Ascending aorta (tissue), 2 donors: ENCODE measurements at regions of chr7 and their contacts with region 1.

Region 1: DNA sequence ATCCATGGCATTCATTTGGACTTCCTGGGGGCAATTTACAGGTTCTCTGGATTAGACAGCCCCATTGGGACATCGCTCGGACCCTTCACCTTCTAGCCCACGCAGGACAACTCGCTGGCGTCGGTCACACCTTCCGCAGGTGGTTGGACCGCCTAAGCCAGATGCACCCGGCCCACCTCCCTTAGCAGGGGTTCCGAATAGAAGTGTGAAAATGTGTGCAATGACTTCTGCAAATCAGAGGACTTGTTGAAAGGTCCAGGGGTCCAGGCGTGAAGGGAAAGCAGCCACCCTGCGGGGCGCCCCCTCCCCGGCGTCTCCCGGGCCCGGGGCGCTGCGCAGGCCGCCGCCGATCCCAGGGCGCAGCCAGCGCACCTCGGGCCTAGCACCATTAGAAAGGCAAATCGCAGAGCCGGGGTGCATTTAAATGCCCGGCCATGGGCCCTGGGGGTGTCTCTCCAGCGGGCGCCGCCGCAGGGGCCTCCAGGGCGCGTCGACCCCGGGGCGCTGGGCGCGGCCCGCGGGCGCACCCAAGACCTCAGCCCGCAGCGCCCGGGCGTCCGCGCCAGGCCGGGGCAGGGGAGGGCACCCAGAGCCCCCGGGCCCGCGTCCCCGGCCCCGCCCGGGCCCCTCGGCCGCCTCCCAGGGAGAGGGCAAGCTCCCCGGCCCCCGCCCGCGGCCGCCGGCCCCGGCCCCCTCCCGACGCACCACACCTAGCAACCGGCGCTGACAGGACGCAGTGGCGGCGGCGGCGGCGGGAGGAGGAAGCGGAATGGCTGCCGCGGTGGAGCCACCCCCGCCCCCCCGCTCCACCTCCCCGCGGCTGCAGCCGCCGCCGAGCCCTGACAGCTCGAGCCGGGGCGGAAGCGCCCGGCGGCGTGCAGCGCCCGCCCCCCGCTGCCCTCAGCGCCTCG is 1.2 kb downstream of the JAZF1 start:
- DNase-seq: peak in 1 of 2 donors; percentile 85
- H3K4me3 ChIP-seq: peak overlapping the region; percentile 91 to 100
- H3K27ac ChIP-seq: peak overlapping the region; percentile 67 to 89
- H3K4me1 ChIP-seq: peaks cover 0 to 11% of the 10 kb centered on the region in 2 donors
- H3K27me3 ChIP-seq: no peaks in the 10 kb centered on the region
- CTCF ChIP-seq: no peak

Region 2: DNA sequence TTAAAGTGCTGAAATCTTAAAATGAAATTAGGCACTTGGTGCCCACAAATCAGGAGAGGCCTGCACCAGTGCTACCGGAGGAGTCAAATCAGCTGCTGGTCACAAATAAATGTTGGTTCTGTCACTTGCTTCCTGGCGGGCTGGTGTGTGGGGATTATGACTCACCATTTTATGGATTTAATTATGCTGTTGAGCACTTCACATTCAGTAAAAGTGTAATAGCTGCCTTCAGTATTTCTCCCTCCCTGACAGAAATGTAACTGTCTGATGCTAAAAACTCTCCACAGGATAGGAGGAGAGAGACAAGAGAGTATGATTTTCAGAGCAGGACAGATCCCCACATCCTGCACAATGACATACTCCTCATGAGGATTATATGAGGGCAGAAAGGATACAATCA is 184.7 kb before region 1 on chr7:
- intact Hi-C with region 1: no loop called
- DNase-seq: no peak
- H3K4me3 ChIP-seq: no peak overlapping the region
- H3K27ac ChIP-seq: no peak overlapping the region
- H3K4me1 ChIP-seq: peaks cover 0 to 2% of the 10 kb centered on the region in 2 donors
- H3K27me3 ChIP-seq: no peaks in the 10 kb centered on the region
- CTCF ChIP-seq: no peak

Region 3: DNA sequence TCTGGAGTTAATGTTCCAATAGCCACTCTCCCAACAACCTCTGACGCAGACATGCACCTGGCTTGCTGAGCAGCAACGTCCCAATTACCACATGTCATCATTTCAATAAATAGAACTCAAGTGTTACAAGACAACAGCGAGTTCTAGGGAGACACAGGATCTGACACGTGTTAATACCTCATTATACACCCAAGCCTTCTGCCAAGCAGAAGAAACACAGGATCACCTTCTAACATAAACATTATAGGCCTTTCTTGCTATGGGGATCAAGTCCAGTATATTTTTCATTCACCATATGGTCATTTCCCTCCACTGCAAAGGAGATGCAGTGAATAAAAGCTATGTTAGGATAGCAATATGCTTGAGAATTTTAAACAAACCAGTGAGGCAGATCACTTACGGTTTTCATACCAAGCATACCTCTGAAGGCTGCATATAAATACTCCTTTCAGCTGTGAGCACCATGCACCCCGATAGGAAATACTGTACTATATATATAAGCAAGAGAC is 73.0 kb before region 1 on chr7:
- intact Hi-C with region 1: loop called (anchors 5 kb)
- DNase-seq: no peak
- H3K4me3 ChIP-seq: no peak overlapping the region
- H3K27ac ChIP-seq: no peak overlapping the region
- H3K4me1 ChIP-seq: peaks cover 0 to 2% of the 10 kb centered on the region in 2 donors
- H3K27me3 ChIP-seq: no peaks in the 10 kb centered on the region
- CTCF ChIP-seq: no peak

Region 4: DNA sequence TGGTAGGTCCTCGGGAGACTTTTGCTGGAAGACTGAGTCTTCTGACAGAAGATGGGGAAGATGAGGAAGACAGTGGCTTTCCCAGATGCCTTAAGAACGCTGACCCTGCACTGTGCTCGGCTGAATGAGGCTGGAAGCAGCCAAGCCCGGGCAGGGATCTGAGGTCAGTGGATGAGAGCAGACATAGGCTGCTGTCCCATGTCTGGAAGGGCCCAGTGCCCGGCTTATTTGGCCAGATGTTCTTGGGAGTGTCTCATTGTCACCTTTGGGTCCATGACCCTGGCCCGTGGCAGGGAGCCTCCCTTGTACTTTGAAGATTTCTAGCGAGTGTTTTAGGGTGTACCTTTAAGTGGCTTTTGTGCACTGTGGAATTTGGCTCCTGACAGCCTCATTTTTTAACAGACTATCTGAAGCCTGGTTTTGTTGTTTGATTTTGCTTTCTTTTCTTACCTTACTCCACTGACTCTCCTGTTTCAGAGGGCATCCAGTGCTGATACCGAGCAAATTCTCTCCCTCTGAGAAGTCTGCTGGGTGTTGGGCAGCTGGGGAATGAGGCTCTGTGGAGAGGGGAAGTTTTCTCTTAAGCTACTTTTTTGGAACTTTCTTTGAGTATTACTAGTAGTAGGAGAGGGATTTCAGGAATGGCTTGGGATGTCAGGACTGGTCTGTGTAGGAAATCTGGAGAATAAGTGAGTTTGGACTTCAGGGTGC is 294.4 kb after region 1 on chr7:
- intact Hi-C with region 1: no loop called
- DNase-seq: no peak
- H3K4me3 ChIP-seq: peak overlapping the region; percentile 8 to 47
- H3K27ac ChIP-seq: peak overlapping the region; percentile 58 to 65
- H3K4me1 ChIP-seq: peaks cover 0 to 3% of the 10 kb centered on the region in 2 donors
- H3K27me3 ChIP-seq: no peaks in the 10 kb centered on the region
- CTCF ChIP-seq: no peak